Common myeloid progenitor, CD34-positive (primary cell): ENCODE measurements at regions of chr16 and their contacts with region 1.

Region 1: DNA sequence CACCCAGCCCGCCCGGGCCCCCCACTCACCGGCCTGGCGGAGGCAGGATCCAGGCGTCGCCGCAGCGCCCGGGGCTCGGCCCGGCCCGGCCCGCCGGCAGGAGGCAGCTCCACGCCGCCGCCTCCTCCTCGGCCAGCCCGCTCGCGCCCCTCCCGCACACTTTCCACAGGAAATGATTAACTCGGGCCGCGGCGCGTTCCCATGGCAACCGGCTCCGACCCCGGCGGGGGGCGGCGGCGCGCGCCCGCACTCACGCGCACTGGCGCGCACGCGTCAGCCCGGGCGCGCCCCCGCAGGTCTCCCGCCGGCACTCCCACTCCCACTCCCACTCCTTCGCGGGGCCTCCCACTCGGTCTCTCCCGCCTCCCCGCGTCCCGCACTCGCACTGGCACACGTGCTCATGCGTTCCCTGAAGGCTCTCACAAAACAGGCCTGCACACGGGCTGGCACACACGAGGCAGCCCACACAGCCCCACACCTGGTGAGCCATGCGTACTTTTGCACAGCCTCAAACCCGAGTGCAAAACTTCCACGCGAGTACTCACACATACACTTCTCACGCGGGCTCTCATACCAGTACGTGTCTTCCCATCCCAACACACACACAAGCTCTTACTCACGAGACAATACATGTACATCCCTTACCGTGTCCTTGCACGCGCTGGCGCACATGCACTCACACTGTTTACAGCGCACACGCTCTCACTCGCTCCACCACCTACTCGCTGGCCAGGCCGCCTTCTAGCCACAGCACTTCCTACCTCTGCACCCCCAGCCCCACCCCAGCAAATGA is at the start of gene KIFC3:
- DNase-seq: peak; percentile 69 to 80 (median 74)
- H3K4me3 ChIP-seq: peak within 1 kb of the TSS; percentile 16 to 82 (median 60)
- H3K27ac ChIP-seq: peak within 1 kb of the TSS in 1 of 2 experiments; percentile 63
- H3K4me1 ChIP-seq: peaks cover 12 to 68% (median 64%) of the 10 kb centered on the region in 4 experiments
- H3K27me3 ChIP-seq: no peaks in the 10 kb centered on the region

Region 2: GRCh38 chr16:57816334-57816745 is 13.8 kb after region 1 on chr16:
- CTCF ChIA-PET with region 1: interaction called, 46 read pairs
- POLR2A ChIA-PET with region 1: interaction called, 4 read pairs
- DNase-seq: peak; percentile 80 to 98 (median 96)
- H3K4me3 ChIP-seq: peak overlapping the region in 3 of 7 experiments; percentile 4 to 25 (median 24)
- H3K27ac ChIP-seq: peak overlapping the region in 1 of 2 experiments; percentile 52
- H3K4me1 ChIP-seq: peaks cover 0 to 26% (median 18%) of the 10 kb centered on the region in 4 experiments
- H3K27me3 ChIP-seq: no peaks in the 10 kb centered on the region

Region 3: GRCh38 chr16:57892447-57893096 is 90.0 kb after region 1 on chr16:
- CTCF ChIA-PET with region 1: interaction called, 16 read pairs
- POLR2A ChIA-PET with region 1: no interaction called
- DNase-seq: peak; percentile 25 to 67 (median 66)
- H3K4me3 ChIP-seq: peak overlapping the region in 3 of 7 experiments; percentile 3 to 19 (median 12)
- H3K27ac ChIP-seq: no peak overlapping the region
- H3K4me1 ChIP-seq: peaks cover 0 to 40% (median 22%) of the 10 kb centered on the region in 4 experiments
- H3K27me3 ChIP-seq: no peaks in the 10 kb centered on the region